Right ventricle myocardium inferior (tissue), 1 donor: ENCODE measurements at regions of chr20 and their contacts with region 1.

Region 1: DNA sequence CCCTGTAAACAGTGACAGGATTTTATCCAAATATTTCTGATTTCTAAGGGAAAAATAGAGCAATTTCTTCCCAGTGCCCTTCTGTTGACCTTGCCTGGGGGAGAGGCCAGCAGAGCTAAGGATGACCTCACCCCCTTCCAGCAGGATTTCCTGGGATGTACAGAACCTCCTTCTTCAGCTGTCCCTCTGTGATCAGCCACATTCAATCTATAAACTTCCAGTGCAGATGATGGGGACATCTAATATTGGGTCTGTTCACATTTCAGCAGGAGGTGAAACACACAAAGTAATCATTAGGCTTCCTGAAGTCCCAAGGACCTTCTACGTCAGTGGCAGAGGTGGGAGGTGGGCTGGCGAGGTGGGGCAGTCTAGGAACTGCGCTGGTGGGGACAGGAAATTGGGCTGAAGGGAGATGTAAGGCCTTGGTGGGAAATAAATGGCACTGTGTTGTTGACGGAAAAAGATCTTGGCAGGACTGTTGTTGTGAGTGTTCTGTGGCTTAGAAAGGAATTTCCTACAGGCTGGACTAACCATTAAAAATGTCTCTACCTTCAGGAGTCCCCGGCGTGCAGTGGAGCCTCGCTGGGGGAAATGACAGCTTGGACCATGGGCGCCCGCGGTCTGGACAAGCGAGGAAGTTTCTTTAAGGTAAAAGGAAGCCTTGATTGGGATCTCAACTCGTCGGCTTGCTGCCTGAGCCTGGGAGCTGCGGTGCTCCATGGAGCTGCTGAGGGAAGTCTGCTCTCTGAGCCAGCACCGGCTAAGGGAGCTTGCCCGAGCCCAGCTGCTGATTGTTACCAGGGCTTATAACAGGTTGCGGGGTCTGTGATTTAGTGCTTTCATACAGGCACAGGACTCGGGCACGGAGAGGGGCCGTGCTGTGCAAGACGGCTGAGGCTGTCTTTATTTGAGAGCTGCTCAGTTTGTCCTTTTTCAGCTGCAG is 127.9 kb upstream of the NAA20 start:
- DNase-seq: peak; percentile 75
- ATAC-seq: peak; percentile 61

Region 2: DNA sequence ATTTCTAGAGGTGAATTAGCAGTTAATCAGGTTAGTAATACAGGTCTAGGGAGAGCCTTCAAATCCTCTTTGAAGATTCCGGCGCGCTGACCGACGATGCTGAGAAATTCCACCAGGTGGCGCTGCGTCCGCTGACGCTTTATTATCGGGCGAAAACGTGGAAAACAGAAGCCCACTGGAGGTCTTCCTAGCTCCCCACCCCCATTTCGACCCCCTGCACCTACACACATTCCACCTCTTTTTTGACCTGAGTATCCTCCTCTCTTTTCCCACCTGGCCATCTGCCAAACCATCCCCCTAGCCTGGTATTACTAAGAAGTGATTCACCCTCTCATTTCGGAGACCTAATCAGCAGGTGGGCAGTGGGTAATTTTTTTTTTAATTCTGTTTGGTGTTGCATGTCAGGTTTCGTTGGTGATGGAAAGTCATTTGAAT is 196.6 kb before region 1 on chr20:
- intact Hi-C with region 1: loop called (anchors 2 kb)
- DNase-seq: peak; percentile 79
- ATAC-seq: peak; percentile 22

Region 3: DNA sequence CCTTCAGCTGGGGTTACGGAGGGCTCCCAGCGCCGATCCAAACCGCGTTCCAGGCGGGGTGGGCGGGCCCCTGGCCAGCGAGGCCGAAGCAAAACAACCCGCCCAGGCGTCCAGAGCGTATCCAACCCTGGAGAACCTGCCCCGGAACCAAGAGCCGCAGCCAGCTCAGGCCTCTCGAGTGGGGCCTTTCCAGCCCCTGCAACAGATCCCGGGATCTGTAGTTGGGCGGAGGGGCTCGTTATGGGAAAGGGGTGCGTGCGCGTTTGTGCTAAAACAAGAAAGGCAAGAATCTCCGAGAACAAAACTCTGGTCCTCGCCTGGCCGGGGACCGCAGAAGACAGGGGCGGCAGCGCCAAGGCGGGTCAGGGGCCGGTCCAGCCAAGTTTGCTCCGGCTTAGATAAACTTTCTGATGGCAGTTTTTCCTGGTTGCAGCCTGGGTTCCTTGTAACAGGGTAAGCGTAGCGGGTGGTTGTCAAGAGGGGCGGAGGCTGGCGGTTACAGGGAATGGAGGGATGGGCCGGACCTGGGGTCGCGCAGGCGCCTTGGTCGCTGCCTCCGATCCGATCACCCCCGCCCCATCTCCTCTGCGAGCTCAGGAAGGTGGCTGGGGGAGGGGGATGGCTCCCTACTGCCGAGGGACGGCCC is 131.7 kb before region 1 on chr20:
- intact Hi-C with region 1: loop called (anchors 2 kb)
- DNase-seq: peak; percentile 94
- ATAC-seq: peak; percentile 87

Region 4: GRCh38 chr20:19784511-19785172 is 104.6 kb before region 1 on chr20:
- intact Hi-C with region 1: loop called (anchors 2 kb)
- DNase-seq: no peak
- ATAC-seq: peak; percentile 78

Region 5: GRCh38 chr20:19815553-19815991 is 73.7 kb before region 1 on chr20:
- intact Hi-C with region 1: loop called (anchors 1 kb)
- DNase-seq: no peak
- ATAC-seq: peak; percentile 82

Region 6: GRCh38 chr20:19934792-19935491 is 45.7 kb after region 1 on chr20:
- intact Hi-C with region 1: loop called (anchors 5 kb)
- DNase-seq: no peak
- ATAC-seq: peak; percentile 45

Region 7: GRCh38 chr20:19995220-19995863 is 106.1 kb after region 1 on chr20:
- intact Hi-C with region 1: loop called (anchors 5 kb)
- DNase-seq: no peak
- ATAC-seq: no peak

Region 8: GRCh38 chr20:20096421-20096820 is 207.1 kb after region 1 on chr20:
- intact Hi-C with region 1: no loop called
- DNase-seq: no peak
- ATAC-seq: peak; percentile 48